Mammary epithelial cell (primary cell): ENCODE measurements at regions of chr12 and their contacts with region 1.

Region 1: GRCh38 chr12:61879229-61879628 is 381.0 kb upstream of the USP15 start:
- DNase-seq: no peak
- H3K4me3 ChIP-seq: no peak overlapping the region
- H3K27ac ChIP-seq: no peak overlapping the region
- H3K4me1 ChIP-seq: no peaks in the 10 kb centered on the region
- H3K27me3 ChIP-seq: no peaks in the 10 kb centered on the region
- CTCF ChIP-seq: no peak

Region 2: GRCh38 chr12:61808856-61809255 is 70.4 kb before region 1 on chr12:
- CTCF ChIA-PET with region 1: no interaction called
- dilution Hi-C with region 1: no loop called
- in situ Hi-C with region 1: no loop called
- intact Hi-C with region 1: loop called (anchors 2 kb)
- DNase-seq: peak; percentile 30
- H3K4me3 ChIP-seq: no peak overlapping the region
- H3K27ac ChIP-seq: no peak overlapping the region
- H3K4me1 ChIP-seq: peaks cover 3% of the 10 kb centered on the region
- H3K27me3 ChIP-seq: no peaks in the 10 kb centered on the region
- CTCF ChIP-seq: no peak

Region 3: GRCh38 chr12:61846765-61847164 is 32.5 kb before region 1 on chr12:
- CTCF ChIA-PET with region 1: no interaction called
- dilution Hi-C with region 1: no loop called
- in situ Hi-C with region 1: no loop called
- intact Hi-C with region 1: no loop called
- DNase-seq: no peak
- H3K4me3 ChIP-seq: no peak overlapping the region
- H3K27ac ChIP-seq: no peak overlapping the region
- H3K4me1 ChIP-seq: no peaks in the 10 kb centered on the region
- H3K27me3 ChIP-seq: no peaks in the 10 kb centered on the region
- CTCF ChIP-seq: no peak